ENCODE measurements at regions of chr6 and their contacts with region 1.

Region 1: GRCh38 chr6:149316798-149317655 is 485 bp upstream of the TAB2 start:
- DNase-seq: peak; percentile 79
- ATAC-seq: peak; percentile 80
- H3K4me3 Mint-ChIP-seq: peak overlapping the region; percentile 93
- H3K27ac Mint-ChIP-seq: peak overlapping the region; percentile 87
- H3K4me1 Mint-ChIP-seq: peaks cover 37% of the 10 kb centered on the region
- H3K27me3 Mint-ChIP-seq: no peaks in the 10 kb centered on the region
- CTCF ChIP-seq: no peak

Region 2: DNA sequence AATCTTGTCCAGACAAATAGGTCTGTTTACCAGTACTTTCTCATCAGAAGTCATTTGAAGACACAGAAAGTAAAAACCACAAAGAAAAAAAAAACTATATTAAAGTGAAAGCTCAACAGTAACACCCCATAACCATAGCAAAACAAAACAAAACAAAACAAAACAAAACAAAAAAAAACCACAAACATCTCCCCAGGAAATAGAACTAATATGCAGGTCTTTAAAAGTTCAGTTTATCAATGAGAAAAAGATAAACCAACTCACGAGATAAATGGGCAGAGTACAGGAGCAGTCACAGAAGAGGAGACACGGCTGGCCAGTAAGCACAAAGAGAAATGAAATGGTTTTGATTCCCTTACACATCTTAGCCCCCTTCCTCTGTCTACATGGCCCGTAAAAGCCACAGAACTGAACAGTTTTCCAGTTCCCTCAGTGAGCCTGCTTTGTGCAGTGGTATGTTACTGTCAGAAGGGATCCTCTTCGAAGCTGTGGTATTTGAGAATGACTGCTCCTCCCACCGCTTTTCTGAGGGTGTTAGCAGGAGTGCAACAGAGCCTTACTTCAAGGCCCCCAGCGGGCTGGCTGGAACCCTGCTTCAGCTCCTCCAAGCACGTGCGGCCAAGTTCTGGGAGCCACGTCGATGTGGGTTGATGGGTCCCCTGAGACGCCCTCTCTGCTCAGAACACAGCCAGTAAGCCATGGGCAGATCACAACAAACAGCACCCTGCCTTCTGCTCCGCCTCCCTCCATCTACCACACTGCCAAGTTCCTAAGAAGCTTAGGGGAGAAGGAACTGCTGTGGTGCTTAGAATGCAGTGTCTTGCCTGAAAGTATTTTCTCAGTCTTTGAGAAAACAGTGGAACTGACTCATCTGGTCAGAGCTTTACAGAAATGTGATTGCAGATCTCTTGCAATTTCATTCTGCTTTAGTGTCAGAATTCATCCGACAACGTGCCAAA is 556.2 kb before region 1 on chr6:
- CTCF ChIA-PET with region 1: no interaction called
- POLR2A ChIA-PET with region 1: interaction called, 3 read pairs
- intact Hi-C with region 1: loop called (anchors 5 kb)
- DNase-seq: peak; percentile 73
- ATAC-seq: peak; percentile 54
- H3K4me3 Mint-ChIP-seq: peak overlapping the region; percentile 84
- H3K27ac Mint-ChIP-seq: peak overlapping the region; percentile 93
- H3K4me1 Mint-ChIP-seq: peaks cover 98% of the 10 kb centered on the region
- H3K27me3 Mint-ChIP-seq: no peaks in the 10 kb centered on the region
- CTCF ChIP-seq: no peak

Region 3: GRCh38 chr6:149082286-149082707 is 234.7 kb before region 1 on chr6:
- CTCF ChIA-PET with region 1: no interaction called
- POLR2A ChIA-PET with region 1: interaction called, 3 read pairs
- intact Hi-C with region 1: loop called (anchors 5 kb)
- DNase-seq: peak; percentile 43
- ATAC-seq: peak; percentile 75
- H3K4me3 Mint-ChIP-seq: no peak overlapping the region
- H3K27ac Mint-ChIP-seq: no peak overlapping the region
- H3K4me1 Mint-ChIP-seq: peaks cover 13% of the 10 kb centered on the region
- H3K27me3 Mint-ChIP-seq: no peaks in the 10 kb centered on the region
- CTCF ChIP-seq: peak; percentile 26

Region 4: DNA sequence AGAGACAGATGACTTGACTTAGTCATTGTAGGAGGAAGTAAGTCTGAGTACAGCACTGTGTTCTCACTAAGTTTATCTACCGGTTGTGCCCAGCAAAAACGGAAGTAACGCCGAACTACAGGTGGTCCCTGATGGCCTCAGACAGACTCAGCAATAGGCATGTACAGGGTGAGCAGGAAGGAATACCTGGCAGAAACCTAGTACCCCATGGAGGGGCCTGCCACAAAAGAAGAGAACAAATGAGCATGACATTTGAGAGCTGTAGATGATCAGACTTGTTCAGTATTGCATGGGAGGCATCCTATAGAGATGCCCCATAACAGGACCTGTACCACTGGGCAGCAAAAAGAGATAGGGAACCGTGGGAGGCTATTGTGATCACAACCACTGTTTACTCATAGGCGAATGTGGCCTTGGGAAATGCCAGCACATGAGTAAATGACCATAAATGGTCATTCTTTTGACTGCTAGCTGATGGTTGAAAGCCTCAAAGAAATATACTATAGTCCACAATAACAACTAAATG is 105.9 kb before region 1 on chr6:
- CTCF ChIA-PET with region 1: no interaction called
- POLR2A ChIA-PET with region 1: interaction called, 5 read pairs
- intact Hi-C with region 1: loop called (anchors 2 kb)
- DNase-seq: no peak
- ATAC-seq: peak; percentile 96
- H3K4me3 Mint-ChIP-seq: no peak overlapping the region
- H3K27ac Mint-ChIP-seq: peak overlapping the region; percentile 87
- H3K4me1 Mint-ChIP-seq: peaks cover 12% of the 10 kb centered on the region
- H3K27me3 Mint-ChIP-seq: no peaks in the 10 kb centered on the region
- CTCF ChIP-seq: no peak

Region 5: DNA sequence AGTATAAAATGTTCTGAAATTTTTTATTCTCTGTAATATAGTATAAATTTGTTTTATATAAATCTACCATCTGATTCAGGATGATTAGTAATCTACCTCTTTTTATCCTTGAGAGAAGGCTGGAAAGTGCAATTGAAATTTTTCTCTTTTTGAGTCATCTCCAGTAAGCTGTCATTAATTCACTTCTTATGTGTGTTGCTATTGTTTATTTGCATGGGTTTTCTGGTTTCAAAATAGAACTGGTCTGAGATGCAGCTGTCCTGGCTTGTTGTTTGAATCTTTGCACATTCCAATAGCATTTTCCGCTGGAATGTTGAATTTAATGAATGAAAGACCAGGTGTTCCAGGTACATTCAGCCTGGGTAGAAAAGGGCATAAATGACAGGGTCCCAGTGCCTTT is 23.8 kb before region 1 on chr6:
- CTCF ChIA-PET with region 1: no interaction called
- POLR2A ChIA-PET with region 1: interaction called, 4 read pairs
- intact Hi-C with region 1: loop called (anchors 2 kb)
- DNase-seq: no peak
- ATAC-seq: no peak
- H3K4me3 Mint-ChIP-seq: no peak overlapping the region
- H3K27ac Mint-ChIP-seq: no peak overlapping the region
- H3K4me1 Mint-ChIP-seq: no peaks in the 10 kb centered on the region
- H3K27me3 Mint-ChIP-seq: no peaks in the 10 kb centered on the region
- CTCF ChIP-seq: no peak

Region 6: GRCh38 chr6:149393002-149393679 is 76.1 kb after region 1 on chr6:
- CTCF ChIA-PET with region 1: no interaction called
- POLR2A ChIA-PET with region 1: no interaction called
- intact Hi-C with region 1: no loop called
- DNase-seq: no peak
- ATAC-seq: no peak
- H3K4me3 Mint-ChIP-seq: no peak overlapping the region
- H3K27ac Mint-ChIP-seq: no peak overlapping the region
- H3K4me1 Mint-ChIP-seq: peaks cover 16% of the 10 kb centered on the region
- H3K27me3 Mint-ChIP-seq: no peaks in the 10 kb centered on the region
- CTCF ChIP-seq: no peak

Region 7: DNA sequence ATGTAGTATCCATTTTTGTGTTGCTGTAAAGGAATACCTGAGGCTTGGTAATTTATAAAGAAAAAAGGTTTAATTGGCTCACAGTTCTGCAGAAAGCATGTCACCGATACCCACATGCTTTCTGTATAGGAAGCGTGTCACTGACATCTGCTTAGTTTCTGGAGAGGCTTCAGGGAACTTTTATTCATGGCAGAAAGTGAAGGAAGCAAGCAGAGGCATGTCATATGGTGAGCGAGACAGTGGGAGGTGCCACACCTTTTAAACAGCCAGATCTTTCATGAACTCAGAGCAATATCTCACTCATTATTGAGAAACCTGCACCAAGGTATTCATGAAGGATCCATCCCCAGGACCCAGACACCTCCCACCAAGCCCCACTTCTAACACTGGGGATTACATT is 86.5 kb after region 1 on chr6:
- CTCF ChIA-PET with region 1: no interaction called
- POLR2A ChIA-PET with region 1: no interaction called
- intact Hi-C with region 1: no loop called
- DNase-seq: no peak
- ATAC-seq: no peak
- H3K4me3 Mint-ChIP-seq: no peak overlapping the region
- H3K27ac Mint-ChIP-seq: no peak overlapping the region
- H3K4me1 Mint-ChIP-seq: no peaks in the 10 kb centered on the region
- H3K27me3 Mint-ChIP-seq: no peaks in the 10 kb centered on the region
- CTCF ChIP-seq: no peak

Region 8: DNA sequence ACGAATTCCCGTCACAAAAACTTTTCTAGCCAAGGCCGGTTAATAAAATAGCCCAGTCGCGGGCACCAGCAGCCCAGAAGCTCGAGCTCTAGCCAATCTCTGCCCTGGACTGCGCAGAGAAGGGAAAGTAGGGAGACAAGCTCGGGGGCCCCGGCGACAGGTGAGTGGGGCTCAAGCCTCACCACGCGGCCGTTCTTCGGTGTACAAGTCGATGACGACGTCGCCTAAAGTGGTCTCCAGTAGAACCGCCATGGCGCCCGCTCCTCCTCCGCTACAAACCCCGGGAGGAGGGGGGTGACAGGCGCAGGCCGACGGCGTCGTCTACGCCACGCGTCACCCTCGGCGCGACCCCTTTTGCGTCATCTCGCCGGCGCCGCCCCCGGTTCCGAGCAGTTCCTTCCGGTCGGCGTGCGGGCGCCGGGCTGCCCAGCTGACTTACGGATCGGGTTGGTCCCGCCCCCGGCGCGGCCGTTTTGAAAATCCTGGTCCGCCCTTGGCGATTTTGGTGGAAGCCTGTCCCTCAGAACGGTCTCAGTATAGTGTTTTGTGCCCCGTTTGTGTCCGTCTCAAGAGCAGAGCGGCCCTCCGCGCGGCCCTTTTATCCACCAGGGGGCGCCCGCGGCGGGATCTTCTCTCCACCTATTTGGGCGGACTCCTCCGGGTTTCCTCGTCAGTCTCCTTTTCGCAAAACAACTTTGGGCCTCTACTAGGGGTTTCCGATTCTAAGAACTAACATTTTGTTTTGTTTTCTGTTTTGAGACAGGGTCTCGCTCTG is 228.9 kb after region 1 on chr6 and contains the start of gene PPIL4:
- CTCF ChIA-PET with region 1: no interaction called
- POLR2A ChIA-PET with region 1: interaction called, 4 read pairs
- intact Hi-C with region 1: loop called (anchors 5 kb)
- DNase-seq: peak; percentile 98
- ATAC-seq: peak; percentile 88
- H3K4me3 Mint-ChIP-seq: peak within 1 kb of the TSS; percentile 95
- H3K27ac Mint-ChIP-seq: peak within 1 kb of the TSS; percentile 96
- H3K4me1 Mint-ChIP-seq: peaks cover 37% of the 10 kb centered on the region
- H3K27me3 Mint-ChIP-seq: no peaks in the 10 kb centered on the region
- CTCF ChIP-seq: peak; percentile 77
- total RNA-seq, gene PPIL4: 20.9 and 24.0 TPM in 2 replicates

Measured in activated B cell treated with CpG ODN at 0.5 μM for 24 hours (primary cell).